PC-9 (cell line): ENCODE measurements at regions of chr3 and their contacts with region 1.

Region 1: GRCh38 chr3:105656651-105657504 is 211.9 kb downstream of the CBLB start:
- DNase-seq: no peak
- H3K4me3 ChIP-seq: no peak overlapping the region
- H3K27ac ChIP-seq: no peak overlapping the region
- H3K4me1 ChIP-seq: no peaks in the 10 kb centered on the region
- H3K27me3 ChIP-seq: no peaks in the 10 kb centered on the region
- CTCF ChIP-seq: no peak

Region 2: GRCh38 chr3:106518516-106518915 is 861.6 kb after region 1 on chr3:
- CTCF ChIA-PET with region 1: no interaction called
- POLR2A ChIA-PET with region 1: interaction called, 10 read pairs
- intact Hi-C with region 1: no loop called
- DNase-seq: peak in 1 of 2 experiments; percentile 44
- H3K4me3 ChIP-seq: no peak overlapping the region
- H3K27ac ChIP-seq: no peak overlapping the region
- H3K4me1 ChIP-seq: peaks cover 11% of the 10 kb centered on the region
- H3K27me3 ChIP-seq: no peaks in the 10 kb centered on the region
- CTCF ChIP-seq: no peak